CD4-positive, alpha-beta memory T cell (primary cell): ENCODE measurements at regions of chr6 and their contacts with region 1.

Region 1: DNA sequence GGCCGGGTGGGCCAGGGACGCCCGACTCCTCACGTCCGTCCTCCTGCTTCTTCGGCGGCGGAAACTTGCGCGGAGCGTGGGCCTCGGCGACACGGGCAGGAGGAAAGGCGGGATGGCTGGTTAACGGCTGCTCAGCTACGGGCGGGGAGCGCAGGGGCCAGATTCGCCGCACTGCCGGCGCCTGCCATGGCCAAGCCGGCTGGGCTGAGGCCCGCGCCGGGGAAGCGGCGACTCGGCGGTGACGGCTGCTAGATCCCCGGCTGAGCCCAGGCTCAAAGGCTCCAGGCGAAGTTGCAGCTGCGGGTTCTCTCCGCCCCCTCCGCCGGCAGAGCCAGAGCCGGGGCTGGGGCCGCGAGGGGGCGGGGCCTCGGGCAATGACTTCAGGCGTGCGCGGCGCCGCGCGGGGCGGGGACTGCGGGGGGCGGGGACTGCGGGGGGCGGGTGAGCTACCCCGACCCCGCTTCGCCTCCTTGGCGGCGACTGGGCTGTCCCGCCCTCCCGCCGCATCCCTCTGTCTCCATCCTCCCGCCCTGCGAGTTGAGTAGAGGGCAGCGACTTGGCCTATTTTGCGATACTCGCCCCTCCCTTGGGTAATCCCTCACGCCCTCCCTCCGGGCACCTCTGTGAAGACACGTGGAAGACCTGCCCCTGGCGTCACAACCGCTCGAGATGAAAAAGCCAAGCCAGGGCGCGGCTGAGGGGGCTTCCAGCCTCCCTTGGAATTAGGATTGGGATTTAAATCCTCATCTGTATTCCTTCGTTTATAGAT is at the start of gene CEP85L:
- DNase-seq: peak; percentile 88 to 92 (median 90)
- H3K4me3 ChIP-seq: peak within 1 kb of the TSS; percentile 37 to 75
- H3K4me3 Mint-ChIP-seq: peak within 1 kb of the TSS; percentile 90 to 99 (median 94)
- H3K27ac ChIP-seq: peak within 1 kb of the TSS; percentile 91
- H3K27ac Mint-ChIP-seq: peak within 1 kb of the TSS; percentile 87 to 99 (median 97)
- H3K4me1 ChIP-seq: peaks cover 50% of the 10 kb centered on the region
- H3K4me1 Mint-ChIP-seq: peaks cover 39 to 62% (median 50%) of the 10 kb centered on the region in 4 donors
- H3K27me3 ChIP-seq: no peaks in the 10 kb centered on the region
- H3K27me3 Mint-ChIP-seq: no peaks in the 10 kb centered on the region
- total RNA-seq, gene CEP85L: 64.9 to 71.1 TPM

Region 2: GRCh38 chr6:118679327-118679901 is 27.9 kb after region 1 on chr6:
- CTCF ChIA-PET with region 1: no interaction called
- POLR2A ChIA-PET with region 1: interaction called, 10 read pairs
- intact Hi-C with region 1: loop called (anchors 2 kb)
- DNase-seq: no peak
- H3K4me3 ChIP-seq: no peak overlapping the region
- H3K4me3 Mint-ChIP-seq: peak overlapping the region in 4 of 8 donors; percentile 8 to 59 (median 48)
- H3K27ac ChIP-seq: no peak overlapping the region
- H3K27ac Mint-ChIP-seq: peak overlapping the region in 4 of 7 donors; percentile 16 to 54 (median 32)
- H3K4me1 ChIP-seq: peaks cover 50% of the 10 kb centered on the region
- H3K4me1 Mint-ChIP-seq: peaks cover 54 to 72% (median 66%) of the 10 kb centered on the region in 4 donors
- H3K27me3 ChIP-seq: no peaks in the 10 kb centered on the region
- H3K27me3 Mint-ChIP-seq: no peaks in the 10 kb centered on the region

Region 3: GRCh38 chr6:118724211-118724610 is 72.7 kb after region 1 on chr6:
- CTCF ChIA-PET with region 1: interaction called, 3 read pairs
- POLR2A ChIA-PET with region 1: interaction called, 9 read pairs
- intact Hi-C with region 1: loop called (anchors 2 kb)
- DNase-seq: no peak
- H3K4me3 ChIP-seq: no peak overlapping the region
- H3K4me3 Mint-ChIP-seq: peak overlapping the region in 5 of 8 donors; percentile 7 to 71 (median 59)
- H3K27ac ChIP-seq: no peak overlapping the region
- H3K27ac Mint-ChIP-seq: peak overlapping the region in 4 of 7 donors; percentile 23 to 87 (median 58)
- H3K4me1 ChIP-seq: peaks cover 48% of the 10 kb centered on the region
- H3K4me1 Mint-ChIP-seq: peaks cover 30 to 79% (median 46%) of the 10 kb centered on the region in 4 donors
- H3K27me3 ChIP-seq: no peaks in the 10 kb centered on the region
- H3K27me3 Mint-ChIP-seq: no peaks in the 10 kb centered on the region

Region 4: DNA sequence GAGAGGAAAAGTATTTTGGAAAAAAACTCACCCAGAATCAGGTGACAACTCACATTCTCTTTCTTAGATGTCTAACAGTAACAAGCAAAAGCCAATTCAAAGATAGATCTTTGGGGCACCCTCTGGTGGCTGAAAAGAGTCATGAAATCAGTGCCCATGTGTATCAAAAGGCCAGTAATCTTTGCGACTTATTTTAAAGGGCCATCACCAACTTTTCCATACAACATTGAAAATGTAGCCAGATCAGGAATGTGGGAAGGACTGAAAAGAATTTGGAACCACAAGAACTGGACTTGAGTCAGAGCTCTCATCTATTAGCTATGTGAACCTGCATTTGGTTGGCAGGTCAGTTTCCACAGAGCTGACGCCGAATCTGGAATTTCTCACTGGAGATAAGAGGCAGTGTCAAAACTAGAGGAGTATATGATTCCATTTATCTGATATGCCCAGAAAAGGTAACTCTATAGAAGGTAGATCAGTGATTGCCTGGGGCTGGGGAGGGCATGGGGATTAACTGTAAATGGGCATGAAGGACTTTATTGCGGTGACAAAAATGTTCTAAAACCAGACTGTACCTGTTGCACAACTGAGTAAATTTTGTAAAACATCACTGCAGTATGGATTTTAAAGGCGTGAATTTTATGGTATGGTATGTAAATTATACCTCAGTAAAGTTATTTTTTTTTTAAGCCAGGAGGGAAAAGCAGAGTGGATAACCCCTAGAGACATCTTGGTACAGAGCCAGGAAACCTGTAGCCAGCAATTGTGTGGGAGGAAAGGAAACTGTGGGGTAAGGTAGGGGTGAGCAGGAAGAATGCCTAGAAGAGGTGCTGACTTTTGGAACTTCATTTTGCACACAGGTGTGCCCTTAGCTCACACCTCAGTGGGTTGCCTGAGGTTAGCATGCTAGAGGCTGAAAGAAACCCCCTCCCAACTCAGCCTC is 125.4 kb after region 1 on chr6:
- CTCF ChIA-PET with region 1: interaction called, 5 read pairs
- POLR2A ChIA-PET with region 1: interaction called, 6 read pairs
- intact Hi-C with region 1: loop called (anchors 1 kb)
- DNase-seq: peak; percentile 63 to 73 (median 71)
- H3K4me3 ChIP-seq: no peak overlapping the region
- H3K4me3 Mint-ChIP-seq: peak overlapping the region in 6 of 8 donors; percentile 2 to 71 (median 50)
- H3K27ac ChIP-seq: no peak overlapping the region
- H3K27ac Mint-ChIP-seq: peak overlapping the region; percentile 16 to 90 (median 74)
- H3K4me1 ChIP-seq: peaks cover 21% of the 10 kb centered on the region
- H3K4me1 Mint-ChIP-seq: peaks cover 17 to 26% (median 21%) of the 10 kb centered on the region in 4 donors
- H3K27me3 ChIP-seq: no peaks in the 10 kb centered on the region
- H3K27me3 Mint-ChIP-seq: no peaks in the 10 kb centered on the region

Region 5: GRCh38 chr6:118800394-118801071 is 149.1 kb after region 1 on chr6:
- CTCF ChIA-PET with region 1: interaction called, 4 read pairs
- POLR2A ChIA-PET with region 1: interaction called, 8 read pairs
- intact Hi-C with region 1: loop called (anchors 1 kb)
- DNase-seq: peak; percentile 87 to 90 (median 87)
- H3K4me3 ChIP-seq: no peak overlapping the region
- H3K4me3 Mint-ChIP-seq: peak overlapping the region; percentile 52 to 86 (median 65)
- H3K27ac ChIP-seq: peak overlapping the region; percentile 11
- H3K27ac Mint-ChIP-seq: peak overlapping the region; percentile 71 to 96 (median 93)
- H3K4me1 ChIP-seq: peaks cover 30% of the 10 kb centered on the region
- H3K4me1 Mint-ChIP-seq: peaks cover 29 to 53% (median 39%) of the 10 kb centered on the region in 4 donors
- H3K27me3 ChIP-seq: no peaks in the 10 kb centered on the region
- H3K27me3 Mint-ChIP-seq: no peaks in the 10 kb centered on the region

Region 6: GRCh38 chr6:118934461-118935330 is 283.2 kb after region 1 on chr6 and contains the start of gene MCM9:
- CTCF ChIA-PET with region 1: no interaction called
- POLR2A ChIA-PET with region 1: interaction called, 11 read pairs
- intact Hi-C with region 1: loop called (anchors 10 kb)
- DNase-seq: peak; percentile 84 to 88 (median 85)
- H3K4me3 ChIP-seq: peak within 1 kb of the TSS; percentile 88 to 98
- H3K4me3 Mint-ChIP-seq: peak within 1 kb of the TSS; percentile 90 to 94 (median 91)
- H3K27ac ChIP-seq: peak within 1 kb of the TSS; percentile 84
- H3K27ac Mint-ChIP-seq: peak within 1 kb of the TSS; percentile 89 to 96 (median 93)
- H3K4me1 ChIP-seq: peaks cover 19% of the 10 kb centered on the region
- H3K4me1 Mint-ChIP-seq: peaks cover 21 to 43% (median 25%) of the 10 kb centered on the region in 4 donors
- H3K27me3 ChIP-seq: no peaks in the 10 kb centered on the region
- H3K27me3 Mint-ChIP-seq: no peaks in the 10 kb centered on the region
- total RNA-seq, gene MCM9: 33.8 to 36.6 TPM

Region 7: GRCh38 chr6:119078376-119079282 is 427.2 kb after region 1 on chr6 and contains the start of gene FAM184A:
- CTCF ChIA-PET with region 1: no interaction called
- POLR2A ChIA-PET with region 1: no interaction called
- intact Hi-C with region 1: loop called (anchors 10 kb)
- DNase-seq: peak; percentile 81 to 84 (median 82)
- H3K4me3 ChIP-seq: peak within 1 kb of the TSS; percentile 68 to 80
- H3K4me3 Mint-ChIP-seq: peak within 1 kb of the TSS; percentile 90 to 98 (median 96)
- H3K27ac ChIP-seq: peak within 1 kb of the TSS; percentile 38
- H3K27ac Mint-ChIP-seq: peak within 1 kb of the TSS; percentile 90 to 98 (median 95)
- H3K4me1 ChIP-seq: peaks cover 35% of the 10 kb centered on the region
- H3K4me1 Mint-ChIP-seq: peaks cover 30 to 39% (median 33%) of the 10 kb centered on the region in 4 donors
- H3K27me3 ChIP-seq: no peaks in the 10 kb centered on the region
- H3K27me3 Mint-ChIP-seq: no peaks in the 10 kb centered on the region
- total RNA-seq, gene FAM184A: 5.6 to 6.1 TPM